BJ (cell line): ENCODE measurements at regions of chr5 and their contacts with region 1.

Region 1: GRCh38 chr5:141701360-141702119 is 19.5 kb upstream of the ARAP3 start:
- DNase-seq: no peak
- H3K4me3 ChIP-seq: no peak overlapping the region
- H3K27me3 ChIP-seq: peaks cover 61% of the 10 kb centered on the region
- CTCF ChIP-seq: no peak

Region 2: GRCh38 chr5:141664732-141665461 is 36.6 kb before region 1 on chr5:
- CTCF ChIA-PET with region 1: interaction called, 10 read pairs
- POLR2A ChIA-PET with region 1: no interaction called
- DNase-seq: no peak
- H3K4me3 ChIP-seq: no peak overlapping the region
- H3K27me3 ChIP-seq: no peaks in the 10 kb centered on the region
- CTCF ChIP-seq: peak; percentile 96

Region 3: GRCh38 chr5:141681695-141682641 is 19.6 kb before region 1 on chr5 and contains the start of gene ARAP3:
- CTCF ChIA-PET with region 1: interaction called, 12 read pairs
- POLR2A ChIA-PET with region 1: no interaction called
- DNase-seq: peak; percentile 49
- H3K4me3 ChIP-seq: peak within 1 kb of the TSS; percentile 44
- H3K27me3 ChIP-seq: no peaks in the 10 kb centered on the region
- CTCF ChIP-seq: no peak
- polyA plus RNA-seq, gene ARAP3: 4.1 and 5.6 TPM in 2 replicates

Region 4: GRCh38 chr5:141713616-141714309 is 12.2 kb after region 1 on chr5:
- CTCF ChIA-PET with region 1: interaction called, 32 read pairs
- POLR2A ChIA-PET with region 1: no interaction called
- DNase-seq: no peak
- H3K4me3 ChIP-seq: no peak overlapping the region
- H3K27me3 ChIP-seq: peaks cover 15% of the 10 kb centered on the region
- CTCF ChIP-seq: no peak

Region 5: GRCh38 chr5:141821361-141821925 is 119.9 kb after region 1 on chr5:
- CTCF ChIA-PET with region 1: interaction called, 11 read pairs
- POLR2A ChIA-PET with region 1: no interaction called
- DNase-seq: peak; percentile 90
- H3K4me3 ChIP-seq: no peak overlapping the region
- H3K27me3 ChIP-seq: peaks cover 5% of the 10 kb centered on the region
- CTCF ChIP-seq: no peak